RWPE1 (cell line): ENCODE measurements at regions of chr2 and their contacts with region 1.

Region 1: DNA sequence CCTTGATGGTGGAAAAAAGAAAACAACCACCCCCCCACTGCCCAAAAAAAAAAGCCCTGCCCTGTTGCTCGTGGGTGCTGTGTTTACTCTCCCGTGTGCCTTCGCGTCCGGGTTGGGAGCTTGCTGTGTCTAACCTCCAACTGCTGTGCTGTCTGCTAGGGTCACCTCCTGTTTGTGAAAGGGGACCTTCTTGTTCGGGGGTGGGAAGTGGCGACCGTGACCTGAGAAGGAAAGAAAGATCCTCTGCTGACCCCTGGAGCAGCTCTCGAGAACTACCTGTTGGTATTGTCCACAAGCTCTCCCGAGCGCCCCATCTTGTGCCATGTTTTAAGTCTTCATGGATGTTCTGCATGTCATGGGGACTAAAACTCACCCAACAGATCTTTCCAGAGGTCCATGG is 28.0 kb downstream of the MAL start:
- DNase-seq: no peak
- H3K27ac ChIP-seq: no peak overlapping the region
- CTCF ChIP-seq: no peak

Region 2: GRCh38 chr2:95022309-95023221 is 31.0 kb before region 1 on chr2:
- CTCF ChIA-PET with region 1: interaction called, 18 read pairs
- POLR2A ChIA-PET with region 1: no interaction called
- DNase-seq: peak; percentile 61
- H3K27ac ChIP-seq: no peak overlapping the region
- CTCF ChIP-seq: peak; percentile 77